ENCODE measurements at regions of chr3 and their contacts with region 1.

Region 1: DNA sequence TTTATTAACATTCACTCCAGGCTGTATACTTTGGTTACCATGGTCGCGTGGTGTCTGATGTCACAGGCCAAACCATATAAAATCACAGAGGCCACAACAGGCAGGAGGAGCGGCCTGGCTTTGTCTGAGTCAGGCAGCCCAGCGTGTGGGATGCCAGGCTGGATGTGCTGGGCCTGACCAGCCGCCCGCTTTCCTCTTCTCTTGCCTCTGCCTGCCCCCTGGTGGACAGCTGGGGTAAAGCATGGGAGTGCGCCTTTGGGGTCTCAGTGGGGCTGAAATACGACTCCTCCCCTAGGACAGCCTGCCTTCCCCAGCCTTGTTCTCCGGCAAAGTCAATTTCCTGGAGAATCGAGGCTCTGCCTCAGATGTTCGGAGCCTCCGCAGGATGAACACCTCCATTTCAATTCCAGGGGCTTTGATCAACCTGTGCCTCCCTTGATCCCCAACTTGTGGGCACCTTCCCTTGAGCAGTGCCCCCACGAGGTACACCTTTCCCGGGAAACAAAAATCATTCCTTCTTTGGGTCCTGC is 78.2 kb downstream of the CCNL1 start:
- DNase-seq: peak; percentile 87
- ATAC-seq: peak; percentile 95
- H3K4me3 Mint-ChIP-seq: no peak overlapping the region
- H3K27ac Mint-ChIP-seq: peak overlapping the region; percentile 53
- H3K4me1 Mint-ChIP-seq: peaks cover 28% of the 10 kb centered on the region
- H3K27me3 Mint-ChIP-seq: no peaks in the 10 kb centered on the region

Region 2: DNA sequence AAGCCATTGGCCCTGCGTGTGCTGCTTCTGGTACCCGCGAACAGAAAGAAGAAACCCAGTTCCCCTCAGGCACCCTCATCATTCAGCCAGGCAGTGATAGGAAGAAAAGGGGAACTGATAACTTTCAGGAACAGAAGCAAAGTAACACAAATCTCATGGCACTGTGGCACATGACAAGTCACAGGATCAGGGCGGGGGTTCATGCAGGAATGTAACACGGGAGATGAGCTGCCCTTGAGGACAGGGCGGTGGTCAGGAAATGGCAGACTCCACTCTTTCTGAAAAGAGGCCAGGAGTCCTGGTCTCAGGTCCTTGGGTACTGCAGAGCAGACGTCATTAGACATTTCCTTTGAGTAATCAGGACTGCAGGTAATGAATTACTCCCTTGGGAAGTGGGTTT is 17.3 kb before region 1 on chr3:
- CTCF ChIA-PET with region 1: interaction called, 19 read pairs
- POLR2A ChIA-PET with region 1: no interaction called
- DNase-seq: no peak
- ATAC-seq: no peak
- H3K4me3 Mint-ChIP-seq: no peak overlapping the region
- H3K27ac Mint-ChIP-seq: peak overlapping the region; percentile 2
- H3K4me1 Mint-ChIP-seq: peaks cover 24% of the 10 kb centered on the region
- H3K27me3 Mint-ChIP-seq: peaks cover 2% of the 10 kb centered on the region

Region 3: GRCh38 chr3:157130467-157131251 is 48.9 kb after region 1 on chr3:
- CTCF ChIA-PET with region 1: interaction called, 301 read pairs
- POLR2A ChIA-PET with region 1: interaction called, 3 read pairs
- DNase-seq: peak; percentile 78
- ATAC-seq: peak; percentile 41
- H3K4me3 Mint-ChIP-seq: peak overlapping the region; percentile 50
- H3K27ac Mint-ChIP-seq: peak overlapping the region; percentile 92
- H3K4me1 Mint-ChIP-seq: peaks cover 89% of the 10 kb centered on the region
- H3K27me3 Mint-ChIP-seq: no peaks in the 10 kb centered on the region

Region 4: DNA sequence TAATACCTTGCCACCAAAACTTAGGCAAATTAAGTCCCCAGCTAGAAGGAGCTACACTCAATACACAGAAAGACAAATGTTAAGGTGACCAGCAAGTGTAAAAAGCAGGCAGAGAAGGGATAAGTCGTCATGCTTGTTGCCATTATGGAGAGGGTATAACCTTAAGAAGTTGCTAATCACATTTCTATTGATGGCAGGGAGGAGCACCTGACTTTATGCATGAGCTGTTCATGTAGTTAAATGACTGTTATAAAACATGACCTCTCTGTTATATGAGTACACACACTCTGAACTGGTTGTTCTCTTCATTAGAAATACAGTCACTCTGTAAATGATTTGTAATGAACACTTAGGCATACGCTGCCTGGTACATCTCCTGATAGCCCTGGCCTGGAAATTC is 84.8 kb after region 1 on chr3:
- CTCF ChIA-PET with region 1: no interaction called
- POLR2A ChIA-PET with region 1: no interaction called
- DNase-seq: no peak
- ATAC-seq: no peak
- H3K4me3 Mint-ChIP-seq: no peak overlapping the region
- H3K27ac Mint-ChIP-seq: no peak overlapping the region
- H3K4me1 Mint-ChIP-seq: peaks cover 15% of the 10 kb centered on the region
- H3K27me3 Mint-ChIP-seq: no peaks in the 10 kb centered on the region